Colonic mucosa (tissue), 4 donors: ENCODE measurements at regions of chr11 and their contacts with region 1.

Region 1: DNA sequence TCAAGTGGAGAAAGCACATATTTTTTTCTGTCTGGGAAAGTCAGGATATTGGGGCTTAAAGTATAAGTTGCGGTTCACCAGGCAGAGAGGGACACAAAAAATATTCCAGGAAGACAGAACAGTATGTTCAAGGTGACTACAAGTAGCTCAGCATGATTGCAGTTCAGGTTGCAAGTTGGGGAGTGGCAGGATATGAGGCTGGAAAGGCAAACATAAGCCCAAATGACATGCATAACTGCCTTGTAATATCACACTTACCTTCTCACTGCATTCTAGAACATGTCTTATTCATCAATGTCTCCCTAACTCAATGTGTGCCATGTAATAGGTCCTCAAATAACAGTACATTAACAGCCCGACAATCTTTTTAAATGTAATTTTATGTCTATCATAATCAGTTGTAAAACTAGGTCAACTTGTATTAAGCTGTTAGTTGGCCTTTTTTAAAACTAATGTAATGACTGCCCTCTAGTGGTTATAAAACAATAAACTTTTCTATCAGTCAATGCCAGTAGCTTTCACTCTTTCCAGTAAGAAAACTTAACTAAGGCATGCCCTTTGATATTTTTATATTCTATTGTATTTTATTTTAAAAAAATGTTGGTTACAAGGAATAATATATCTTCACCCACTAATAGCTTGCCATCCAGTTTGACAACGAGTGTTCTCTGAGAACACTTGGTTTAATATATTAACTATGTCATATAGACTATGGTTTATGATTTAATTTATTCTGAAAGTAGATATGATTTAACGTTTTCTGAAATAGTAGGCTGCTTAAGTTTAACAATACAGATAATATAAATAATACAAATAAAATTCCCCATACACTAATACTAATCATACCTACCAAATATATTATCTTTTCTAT is 39.4 kb upstream of the CFAP300 start:
- DNase-seq: peak; percentile 77
- H3K4me3 ChIP-seq: no peak overlapping the region
- H3K27ac ChIP-seq: peak overlapping the region; percentile 66
- H3K4me1 ChIP-seq: no peaks in the 10 kb centered on the region
- H3K27me3 ChIP-seq: no peaks in the 10 kb centered on the region
- CTCF ChIP-seq: peak; percentile 40

Region 2: DNA sequence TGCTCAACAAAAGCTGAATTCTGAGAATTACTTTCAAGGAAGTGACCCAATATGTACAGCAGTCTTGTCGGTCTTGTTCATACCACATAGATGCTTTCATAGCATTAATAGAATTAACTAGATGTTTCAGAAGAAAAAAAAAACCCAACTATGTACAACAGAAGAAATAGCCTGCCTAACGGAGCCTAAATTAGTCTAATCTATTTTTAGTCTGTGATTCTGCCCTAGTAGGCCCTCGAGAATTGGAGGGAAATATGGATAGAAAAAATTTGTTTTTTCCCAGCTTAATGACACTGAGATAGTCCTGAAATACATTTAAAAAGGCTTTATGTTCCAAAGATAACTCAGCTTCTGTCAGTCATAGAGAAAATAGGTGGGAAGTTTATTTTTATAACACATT is 406.9 kb before region 1 on chr11:
- intact Hi-C with region 1: no loop called
- DNase-seq: no peak
- H3K4me3 ChIP-seq: no peak overlapping the region
- H3K27ac ChIP-seq: no peak overlapping the region
- H3K4me1 ChIP-seq: no peaks in the 10 kb centered on the region
- H3K27me3 ChIP-seq: no peaks in the 10 kb centered on the region
- CTCF ChIP-seq: no peak

Region 3: DNA sequence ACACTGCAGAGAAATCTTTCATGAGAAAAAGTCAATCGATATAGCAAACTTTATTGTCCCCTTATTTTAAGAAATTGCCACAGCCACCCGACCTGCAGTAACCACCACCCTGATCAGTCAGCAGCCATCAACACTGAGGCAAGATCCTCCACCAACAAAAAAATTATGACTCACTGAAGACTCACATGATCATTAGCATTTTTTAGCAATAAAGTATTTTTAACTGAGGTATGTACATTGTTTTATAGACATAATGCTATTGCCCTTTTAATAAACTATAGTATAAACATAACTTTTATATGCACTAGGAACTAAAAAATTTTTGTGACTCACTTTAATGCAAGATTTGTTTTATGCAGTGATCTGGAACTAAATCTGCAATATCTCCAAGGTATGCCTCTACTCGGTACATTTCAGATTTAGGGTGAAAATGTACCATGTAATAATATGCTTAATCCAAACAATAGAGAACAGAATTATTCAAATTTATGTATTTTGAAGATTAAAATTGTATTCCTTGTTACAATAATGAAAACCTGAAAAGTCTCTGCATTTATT is 172.2 kb before region 1 on chr11:
- intact Hi-C with region 1: no loop called
- DNase-seq: no peak
- H3K4me3 ChIP-seq: no peak overlapping the region
- H3K27ac ChIP-seq: no peak overlapping the region
- H3K4me1 ChIP-seq: no peaks in the 10 kb centered on the region
- H3K27me3 ChIP-seq: no peaks in the 10 kb centered on the region
- CTCF ChIP-seq: no peak

Region 4: GRCh38 chr11:101862409-101863233 is 145.2 kb before region 1 on chr11:
- intact Hi-C with region 1: loop called (anchors 2 kb)
- DNase-seq: peak; percentile 20
- H3K4me3 ChIP-seq: no peak overlapping the region
- H3K27ac ChIP-seq: no peak overlapping the region
- H3K4me1 ChIP-seq: no peaks in the 10 kb centered on the region
- H3K27me3 ChIP-seq: no peaks in the 10 kb centered on the region
- CTCF ChIP-seq: no peak